ENCODE measurements at regions of chr19 and their contacts with region 1.

Region 1: GRCh38 chr19:33143897-33144405 is 12.0 kb downstream of the WDR88 start:
- DNase-seq: peak; percentile 43
- H3K4me3 ChIP-seq: no peak overlapping the region
- H3K27ac ChIP-seq: no peak overlapping the region
- H3K4me1 ChIP-seq: no peaks in the 10 kb centered on the region
- H3K27me3 ChIP-seq: no peaks in the 10 kb centered on the region
- CTCF ChIP-seq: peak; percentile 75 to 89 (median 80)
- POLR2A ChIP-seq: no peak

Region 2: DNA sequence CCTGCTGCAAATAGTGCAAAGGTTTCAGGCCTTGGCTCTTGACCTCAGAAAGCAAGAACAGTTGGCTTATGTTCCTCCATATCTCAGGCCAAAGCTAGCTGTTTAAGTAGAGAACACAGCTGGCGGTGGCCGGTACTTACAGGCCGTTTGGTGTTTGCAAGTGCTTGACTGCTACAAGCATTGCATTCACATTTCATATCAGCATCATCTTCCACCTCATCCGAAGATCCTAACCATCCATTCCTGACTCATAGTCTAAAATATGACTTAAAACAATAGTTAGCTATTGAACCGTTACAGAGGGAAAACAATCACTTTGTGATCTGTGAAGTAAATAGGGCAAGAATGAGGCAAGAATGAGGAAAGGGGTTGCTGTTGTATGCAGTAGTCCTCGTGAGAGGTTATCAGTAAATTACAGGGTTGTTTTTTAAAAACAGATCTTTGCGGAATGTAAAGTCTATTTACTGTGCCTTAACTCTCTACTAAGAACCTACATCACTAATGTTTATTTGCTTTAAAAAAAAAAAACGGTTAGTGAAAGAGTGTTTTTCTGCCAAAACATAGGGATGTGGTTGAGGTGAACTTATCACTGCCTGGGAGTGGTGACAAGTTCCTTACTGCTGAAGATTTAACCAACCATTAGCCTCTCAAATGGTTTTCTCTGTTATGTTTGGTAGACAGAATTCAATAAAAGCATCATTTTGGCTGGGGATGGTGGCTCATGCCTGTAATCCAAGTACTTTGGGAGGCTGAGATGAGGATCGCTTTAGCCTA is 33.6 kb before region 1 on chr19:
- intact Hi-C with region 1: no loop called
- DNase-seq: no peak
- H3K4me3 ChIP-seq: no peak overlapping the region
- H3K27ac ChIP-seq: no peak overlapping the region
- H3K4me1 ChIP-seq: no peaks in the 10 kb centered on the region
- H3K27me3 ChIP-seq: no peaks in the 10 kb centered on the region
- CTCF ChIP-seq: no peak
- POLR2A ChIP-seq: no peak

Region 3: GRCh38 chr19:33176670-33177416 is 32.9 kb after region 1 on chr19:
- intact Hi-C with region 1: loop called (anchors 5 kb)
- DNase-seq: peak; percentile 96
- H3K4me3 ChIP-seq: peak overlapping the region; percentile 57 to 71
- H3K27ac ChIP-seq: peak overlapping the region; percentile 85 to 88
- H3K4me1 ChIP-seq: no peaks in the 10 kb centered on the region
- H3K27me3 ChIP-seq: no peaks in the 10 kb centered on the region
- CTCF ChIP-seq: peak in 2 of 4 experiments; percentile 37 to 44
- POLR2A ChIP-seq: peak; percentile 78

Region 4: GRCh38 chr19:33406521-33407139 is 262.7 kb after region 1 on chr19:
- intact Hi-C with region 1: loop called (anchors 10 kb)
- DNase-seq: peak; percentile 57
- H3K4me3 ChIP-seq: no peak overlapping the region
- H3K27ac ChIP-seq: no peak overlapping the region
- H3K4me1 ChIP-seq: no peaks in the 10 kb centered on the region
- H3K27me3 ChIP-seq: no peaks in the 10 kb centered on the region
- CTCF ChIP-seq: peak; percentile 96 to 98 (median 96)
- POLR2A ChIP-seq: no peak

Measured in prostate gland (tissue), 2 donors.